Head of caudate nucleus (tissue), 42 donors: ENCODE measurements at regions of chr12 and their contacts with region 1.

Region 1: DNA sequence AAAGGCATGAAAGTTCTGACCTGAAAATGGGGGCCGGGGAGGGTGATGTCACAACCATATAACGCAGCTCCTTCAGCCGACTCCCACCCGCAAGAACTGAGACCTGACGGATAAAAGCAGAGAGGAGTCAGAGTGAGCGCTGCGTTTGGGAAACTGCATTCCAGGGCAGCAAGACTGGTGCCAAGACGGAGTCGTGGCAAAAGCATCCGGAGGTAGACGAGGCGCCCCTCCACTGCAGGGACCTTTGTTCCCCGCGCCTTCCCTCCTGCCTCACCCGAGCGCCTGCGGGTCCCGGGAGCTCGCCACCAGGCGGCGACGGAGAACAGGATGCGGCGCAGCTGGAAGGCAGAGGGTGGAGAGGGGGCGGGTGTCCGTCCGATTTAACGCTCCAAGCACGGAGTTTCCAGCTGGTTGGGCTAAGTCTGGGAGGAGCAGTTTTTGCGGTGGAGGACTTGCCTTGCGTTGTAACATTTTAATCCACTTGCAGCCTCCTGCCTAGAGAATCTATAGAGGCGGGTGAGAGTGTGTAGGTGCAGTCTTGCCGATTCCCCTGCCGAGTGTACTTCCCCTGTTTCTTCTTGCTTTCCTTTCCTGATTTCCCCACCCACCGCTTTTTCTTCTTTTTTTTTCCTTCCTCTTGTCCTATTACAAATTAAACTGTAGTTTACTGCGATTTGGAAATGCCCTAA is 1.2 kb upstream of the CPNE8 start:
- DNase-seq: peak; percentile 55 to 94 (median 85)

Region 2: DNA sequence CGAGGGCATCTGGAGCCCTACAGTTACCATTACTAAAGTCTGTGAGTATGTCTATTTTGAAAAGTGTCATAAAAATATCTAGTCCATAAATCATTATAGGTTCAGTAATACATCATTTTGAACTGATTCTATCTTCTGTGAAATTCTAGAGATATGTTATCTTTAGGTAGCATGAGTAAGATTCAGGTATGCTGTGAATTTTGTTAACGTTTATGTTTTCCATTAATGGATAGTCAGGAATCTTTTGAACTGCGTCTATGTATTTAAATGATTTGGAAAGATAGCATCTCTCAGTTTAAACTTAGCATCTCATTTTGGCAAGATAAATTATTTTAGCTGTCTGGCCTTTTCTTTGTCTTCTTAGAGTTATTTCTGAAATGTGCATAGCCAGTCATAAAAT is 581.7 kb before region 1 on chr12:
- intact Hi-C with region 1: loop called (anchors 10 kb)
- DNase-seq: no peak

Region 3: DNA sequence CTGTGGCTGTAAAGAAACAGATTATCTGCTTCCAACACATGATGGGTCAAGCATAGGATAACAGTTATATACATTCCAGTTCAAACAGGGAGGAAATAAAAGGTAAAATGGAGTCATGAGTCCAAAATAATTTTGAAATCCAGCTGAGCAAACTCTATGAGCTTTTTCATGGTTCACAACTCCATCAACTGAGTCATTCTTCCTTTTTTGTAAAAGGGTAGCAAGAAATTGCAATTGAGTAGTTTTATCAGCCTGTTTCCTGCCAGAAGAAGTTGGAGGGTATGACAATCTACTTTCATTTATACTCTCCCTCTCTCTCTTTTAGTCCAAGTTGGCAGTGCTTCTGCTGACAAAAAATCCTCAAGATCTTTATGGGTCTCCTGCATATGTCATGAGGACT is 96.8 kb before region 1 on chr12:
- intact Hi-C with region 1: no loop called
- DNase-seq: no peak

Region 4: GRCh38 chr12:39103552-39104165 is 197.0 kb after region 1 on chr12:
- intact Hi-C with region 1: loop called (anchors 2 kb)
- DNase-seq: peak in 16 of 42 donors; percentile 7 to 72 (median 42)